ENCODE measurements at regions of chr11 and their contacts with region 1.

Region 1: DNA sequence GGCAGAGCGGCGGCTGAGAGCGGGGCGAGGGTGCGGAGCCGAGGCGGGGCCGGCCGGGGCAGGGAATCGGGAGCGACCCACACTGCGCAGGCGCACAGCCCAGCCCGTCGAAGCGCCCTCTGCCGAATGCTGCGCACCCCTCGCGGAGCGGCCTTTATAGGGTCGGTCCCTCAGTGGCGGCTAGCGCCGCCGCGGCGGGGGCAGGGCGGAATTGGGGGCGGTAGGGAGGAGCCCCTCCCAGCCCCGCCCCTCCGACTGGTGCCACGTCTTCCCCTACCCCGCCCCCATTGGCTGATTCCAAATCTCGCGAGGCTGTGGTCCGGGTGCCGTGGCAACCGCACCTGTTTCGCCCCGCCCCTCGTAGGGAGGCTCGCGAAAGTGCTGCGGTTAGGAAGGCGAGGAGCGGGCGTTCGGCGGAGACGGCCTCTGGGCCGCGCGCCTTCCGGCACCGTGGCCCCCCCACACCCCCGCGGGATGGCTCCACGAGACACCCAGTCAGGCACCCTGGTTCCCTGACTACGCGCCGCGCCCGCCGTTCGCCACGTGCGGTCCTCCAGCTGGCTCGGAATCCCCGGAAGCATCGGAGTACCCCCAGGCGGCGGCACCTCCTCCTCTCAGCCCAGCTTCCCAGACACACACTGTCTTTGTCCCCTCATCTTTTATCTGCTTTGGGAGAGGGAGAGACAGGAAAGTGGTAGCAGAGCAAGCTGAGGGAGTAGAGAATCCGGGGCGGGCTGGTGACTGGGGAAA is at the start of gene EHD1:
- DNase-seq: peak; percentile 98 to 99 (median 99)
- ATAC-seq: peak; percentile 91
- H3K4me3 ChIP-seq: peak within 1 kb of the TSS; percentile 100
- H3K4me3 Mint-ChIP-seq: peak within 1 kb of the TSS; percentile 95 to 99 (median 98)
- H3K27ac ChIP-seq: peak within 1 kb of the TSS; percentile 81
- H3K27ac Mint-ChIP-seq: peak within 1 kb of the TSS; percentile 88 to 98 (median 94)
- H3K4me1 ChIP-seq: peaks cover 39 to 45% of the 10 kb centered on the region in 2 donors
- H3K4me1 Mint-ChIP-seq: peaks cover 49 to 65% (median 60%) of the 10 kb centered on the region in 7 donors
- H3K27me3 ChIP-seq: no peaks in the 10 kb centered on the region
- H3K27me3 Mint-ChIP-seq: no peaks in the 10 kb centered on the region
- total RNA-seq, gene EHD1: 124 to 263 (median 208) TPM

Region 2: DNA sequence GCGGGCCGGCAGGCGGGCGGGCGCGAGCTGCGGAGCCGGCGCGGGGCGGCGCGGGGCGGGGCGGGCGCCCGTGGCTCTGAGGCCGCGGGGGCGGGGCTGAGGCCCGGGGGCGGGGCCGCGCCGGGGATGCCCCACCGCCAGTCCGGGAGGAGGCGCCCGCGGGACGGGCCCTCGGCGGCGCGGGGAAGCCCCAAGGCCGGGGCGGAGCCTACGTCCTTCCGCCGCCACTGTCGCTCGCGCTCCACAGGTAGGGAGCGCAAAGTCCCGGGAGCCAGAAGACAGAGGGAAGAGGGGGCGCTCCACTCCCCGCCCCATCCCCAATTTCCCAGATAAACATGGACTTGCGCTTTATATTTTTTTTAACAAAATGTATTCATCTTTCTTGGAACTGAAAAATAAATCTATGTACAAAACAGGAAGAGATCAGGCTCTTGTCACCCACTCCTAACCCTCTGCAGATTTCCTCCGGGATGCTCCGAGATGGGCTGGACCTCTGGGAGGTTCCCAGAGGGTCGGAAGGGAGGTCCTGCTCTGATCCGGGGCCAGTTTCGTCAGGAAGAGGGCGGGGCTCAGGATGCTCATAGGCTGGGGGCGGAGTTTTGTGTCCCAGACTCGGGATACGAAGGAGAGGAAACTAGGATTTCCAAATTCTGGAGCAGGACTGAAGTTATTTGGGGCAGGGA is 75.4 kb before region 1 on chr11 and contains the start of gene MAP4K2:
- CTCF ChIA-PET with region 1: interaction called, 3 read pairs
- POLR2A ChIA-PET with region 1: no interaction called
- intact Hi-C with region 1: loop called in 1 of 2 experiments (anchors 5 kb)
- DNase-seq: peak; percentile 80 to 96 (median 87)
- ATAC-seq: peak; percentile 98
- H3K4me3 ChIP-seq: peak within 1 kb of the TSS; percentile 91
- H3K4me3 Mint-ChIP-seq: peak within 1 kb of the TSS; percentile 85 to 92 (median 88)
- H3K27ac ChIP-seq: peak within 1 kb of the TSS; percentile 98
- H3K27ac Mint-ChIP-seq: peak within 1 kb of the TSS; percentile 82 to 97 (median 95)
- H3K4me1 ChIP-seq: peaks cover 9 to 23% of the 10 kb centered on the region in 2 donors
- H3K4me1 Mint-ChIP-seq: peaks cover 27 to 43% (median 32%) of the 10 kb centered on the region in 7 donors
- H3K27me3 ChIP-seq: no peaks in the 10 kb centered on the region
- H3K27me3 Mint-ChIP-seq: no peaks in the 10 kb centered on the region
- total RNA-seq, gene MAP4K2: 75.2 to 130 (median 84.3) TPM

Region 3: DNA sequence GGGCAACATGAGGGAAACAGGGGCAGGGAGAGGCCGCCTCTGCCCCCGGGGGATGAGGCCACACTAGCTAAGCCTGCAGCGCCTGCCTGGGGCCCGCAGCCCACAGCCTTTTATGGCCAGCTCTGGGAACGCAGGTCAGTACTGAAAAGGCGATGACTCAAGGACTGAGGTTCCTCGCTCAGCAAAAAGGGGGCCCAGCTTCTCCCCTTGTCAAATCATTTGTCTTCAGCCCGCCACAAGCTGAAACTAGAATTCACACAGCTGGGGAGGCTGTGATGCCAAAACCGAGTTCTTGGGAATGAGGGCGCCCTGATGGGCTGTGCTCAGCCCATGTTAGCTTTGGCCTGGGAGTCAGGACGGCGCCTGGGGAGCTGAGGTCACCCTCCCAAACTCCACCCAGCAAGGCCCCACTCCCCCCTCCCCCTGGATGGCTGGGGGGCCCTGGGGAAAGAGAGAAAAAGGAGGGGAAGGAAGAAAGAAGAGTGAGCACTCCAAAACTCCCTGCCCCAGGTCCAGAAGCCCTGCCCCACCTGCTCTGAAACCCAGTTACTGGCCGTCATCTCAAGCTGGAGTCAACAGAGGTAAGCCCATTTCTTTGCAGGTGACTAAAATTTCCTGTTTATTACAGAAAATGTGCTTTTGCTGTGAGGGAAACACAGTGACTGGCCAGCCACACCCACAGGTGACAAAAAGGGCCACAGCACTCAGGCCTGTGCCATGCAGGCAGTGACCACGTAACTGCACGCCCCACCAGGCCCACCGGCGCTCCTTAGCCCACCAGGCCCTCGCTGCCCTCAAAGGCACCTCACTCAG is 14.0 kb before region 1 on chr11:
- CTCF ChIA-PET with region 1: interaction called, 945 read pairs
- POLR2A ChIA-PET with region 1: interaction called, 1,324 read pairs
- intact Hi-C with region 1: loop called (anchors 1 kb)
- DNase-seq: peak in 1 of 9 donors; percentile 63
- ATAC-seq: no peak
- H3K4me3 ChIP-seq: peak overlapping the region; percentile 45
- H3K4me3 Mint-ChIP-seq: peak overlapping the region; percentile 45 to 91 (median 78)
- H3K27ac ChIP-seq: peak overlapping the region; percentile 76
- H3K27ac Mint-ChIP-seq: peak overlapping the region; percentile 89 to 98 (median 96)
- H3K4me1 ChIP-seq: peaks cover 86 to 98% of the 10 kb centered on the region in 2 donors
- H3K4me1 Mint-ChIP-seq: peaks cover 68 to 94% (median 82%) of the 10 kb centered on the region in 7 donors
- H3K27me3 ChIP-seq: no peaks in the 10 kb centered on the region
- H3K27me3 Mint-ChIP-seq: no peaks in the 10 kb centered on the region

Region 4: DNA sequence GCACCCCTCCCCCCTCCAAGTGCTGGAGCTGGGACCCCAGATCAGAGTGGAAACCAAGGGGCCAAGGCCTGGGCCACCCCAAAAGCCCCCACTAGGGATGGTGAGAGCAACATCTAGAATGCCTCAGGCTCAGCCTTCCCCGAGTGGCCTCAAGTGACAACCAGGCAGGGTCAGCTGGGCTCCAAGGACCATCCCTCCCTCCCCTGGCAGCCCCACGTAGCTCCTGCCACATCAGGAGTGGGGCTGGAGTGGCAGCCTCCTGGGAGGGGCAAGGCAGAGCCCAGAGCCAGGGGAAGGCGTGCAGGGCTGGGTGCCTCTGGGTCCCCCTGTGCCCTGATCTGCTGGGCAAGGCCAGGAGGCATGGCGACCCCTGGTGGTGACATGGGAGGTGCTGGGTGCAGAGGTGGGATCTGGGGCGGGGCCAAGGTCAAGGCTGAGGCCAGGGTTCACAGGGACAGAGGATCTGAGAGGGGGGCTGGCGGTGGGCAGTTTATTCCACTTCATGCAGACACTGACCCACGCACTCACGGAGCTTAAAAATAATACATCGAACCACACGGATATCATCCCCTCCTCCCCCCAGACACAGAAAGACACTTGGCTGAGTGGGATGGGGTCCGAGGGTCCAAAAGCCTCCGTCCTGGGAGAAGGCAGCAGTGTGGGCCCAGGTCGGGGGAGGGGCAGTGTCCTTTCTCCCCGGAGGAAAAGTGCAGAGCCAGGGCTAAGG is 15.6 kb after region 1 on chr11:
- CTCF ChIA-PET with region 1: interaction called, 13 read pairs
- POLR2A ChIA-PET with region 1: interaction called, 91 read pairs
- intact Hi-C with region 1: loop called in 1 of 2 experiments (anchors 2 kb)
- DNase-seq: peak; percentile 75 to 93 (median 87)
- ATAC-seq: peak; percentile 89
- H3K4me3 ChIP-seq: no peak overlapping the region
- H3K4me3 Mint-ChIP-seq: peak overlapping the region in 1 of 10 donors; percentile 21
- H3K27ac ChIP-seq: no peak overlapping the region
- H3K27ac Mint-ChIP-seq: peak overlapping the region in 2 of 9 donors; percentile 45 to 75
- H3K4me1 ChIP-seq: peaks cover 0 to 6% of the 10 kb centered on the region in 2 donors
- H3K4me1 Mint-ChIP-seq: peaks cover 0 to 6% (median 0%) of the 10 kb centered on the region in 7 donors
- H3K27me3 ChIP-seq: no peaks in the 10 kb centered on the region
- H3K27me3 Mint-ChIP-seq: no peaks in the 10 kb centered on the region

Region 5: DNA sequence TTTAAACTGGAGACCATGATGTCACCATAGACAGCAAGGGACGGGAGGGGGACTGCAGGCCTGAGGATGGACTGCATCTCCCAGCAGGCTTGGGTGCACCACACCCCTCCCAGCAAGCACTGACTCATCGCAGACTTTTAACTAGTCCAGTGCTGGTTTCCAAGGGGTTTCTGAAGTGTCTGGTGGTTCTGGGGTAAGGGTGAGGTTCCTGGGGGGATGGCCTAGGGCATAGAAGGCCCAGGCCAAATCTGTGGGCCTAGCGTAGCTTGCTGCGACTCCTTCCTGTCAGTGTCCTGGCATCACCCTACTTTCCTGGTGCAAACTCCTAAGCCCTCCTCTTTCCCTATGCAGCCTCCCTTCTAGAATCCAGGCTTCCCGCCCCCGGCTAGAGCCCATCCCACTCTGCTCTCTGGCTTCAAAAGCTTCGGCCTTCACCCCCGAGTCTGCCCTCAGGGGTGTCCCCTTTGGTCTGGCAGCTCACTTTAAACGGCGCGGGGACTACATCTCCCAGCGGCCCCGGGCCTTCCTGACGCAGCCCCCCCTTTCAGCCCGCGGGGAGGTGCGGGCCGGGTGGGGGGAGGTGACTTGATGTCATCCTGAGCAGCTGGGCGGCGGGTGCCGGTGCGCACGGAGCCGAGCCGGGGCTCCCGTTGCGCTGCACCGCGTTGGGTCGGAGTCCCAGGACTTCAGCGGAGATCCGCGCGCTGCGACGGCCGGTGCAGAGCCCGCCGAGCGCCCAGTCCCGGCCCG is 45.6 kb after region 1 on chr11 and contains the start of gene PPP2R5B:
- CTCF ChIA-PET with region 1: interaction called, 3 read pairs
- POLR2A ChIA-PET with region 1: interaction called, 4 read pairs
- intact Hi-C with region 1: loop called (anchors 1 to 2 kb)
- DNase-seq: peak; percentile 79 to 92 (median 89)
- ATAC-seq: peak; percentile 95
- H3K4me3 ChIP-seq: peak within 1 kb of the TSS; percentile 67
- H3K4me3 Mint-ChIP-seq: peak within 1 kb of the TSS; percentile 89 to 99 (median 96)
- H3K27ac ChIP-seq: peak within 1 kb of the TSS; percentile 81
- H3K27ac Mint-ChIP-seq: peak within 1 kb of the TSS; percentile 95 to 100 (median 98)
- H3K4me1 ChIP-seq: peaks cover 11 to 15% of the 10 kb centered on the region in 2 donors
- H3K4me1 Mint-ChIP-seq: peaks cover 9 to 24% (median 14%) of the 10 kb centered on the region in 7 donors
- H3K27me3 ChIP-seq: no peaks in the 10 kb centered on the region
- H3K27me3 Mint-ChIP-seq: no peaks in the 10 kb centered on the region
- total RNA-seq, gene PPP2R5B: 11.9 to 19.1 (median 18.8) TPM

Region 6: DNA sequence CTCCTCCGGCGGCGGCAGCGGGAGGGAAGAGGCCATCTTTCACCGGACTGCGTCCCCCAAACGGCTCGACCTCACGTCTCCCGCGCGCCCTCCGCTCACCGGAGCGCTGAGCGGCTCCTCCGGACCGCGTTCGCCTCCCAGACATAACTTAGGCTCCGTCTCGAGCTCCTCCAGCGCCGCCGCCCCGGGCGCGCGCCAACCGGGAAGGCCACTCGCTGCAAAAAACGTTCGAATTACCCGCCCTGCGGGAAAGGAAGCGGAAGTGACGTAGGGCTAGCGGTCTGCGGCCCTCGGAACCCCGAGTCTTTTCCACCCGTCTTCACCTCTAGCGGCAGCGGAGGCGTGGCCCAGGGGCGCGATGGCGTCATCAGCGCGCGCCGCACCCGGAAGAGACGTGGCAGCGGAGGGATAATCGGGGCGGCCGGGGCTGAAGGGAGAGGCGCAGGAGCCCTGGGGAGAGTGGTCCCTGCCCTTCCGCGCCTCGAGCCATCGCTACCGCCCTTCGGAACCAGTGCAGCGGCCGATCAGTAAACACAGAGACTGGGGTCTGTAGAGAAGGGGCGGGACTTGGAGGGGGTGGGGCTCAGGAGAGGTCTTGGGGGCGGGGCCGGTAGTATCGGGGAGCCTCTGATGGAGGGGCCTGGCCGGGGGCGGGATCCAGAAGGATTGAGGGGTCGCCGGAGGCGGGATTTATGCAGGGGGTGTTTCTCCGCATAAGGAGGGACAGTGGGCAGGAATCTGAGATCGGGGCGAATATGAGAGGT is 205.3 kb after region 1 on chr11 and contains the starts of genes CDCA5 and ZFPL1:
- CTCF ChIA-PET with region 1: no interaction called
- POLR2A ChIA-PET with region 1: no interaction called
- intact Hi-C with region 1: loop called in 1 of 2 experiments (anchors 1 kb)
- DNase-seq: peak; percentile 94 to 98 (median 97)
- ATAC-seq: peak; percentile 96
- H3K4me3 ChIP-seq: peak within 1 kb of the TSS; percentile 61
- H3K4me3 Mint-ChIP-seq: peak within 1 kb of the TSS; percentile 88 to 99 (median 93)
- H3K27ac ChIP-seq: peak within 1 kb of the TSS; percentile 86
- H3K27ac Mint-ChIP-seq: peak within 1 kb of the TSS; percentile 94 to 99 (median 97)
- H3K4me1 ChIP-seq: peaks cover 13 to 14% of the 10 kb centered on the region in 2 donors
- H3K4me1 Mint-ChIP-seq: peaks cover 20 to 49% (median 27%) of the 10 kb centered on the region in 7 donors
- H3K27me3 ChIP-seq: no peaks in the 10 kb centered on the region
- H3K27me3 Mint-ChIP-seq: peaks cover 0 to 4% (median 0%) of the 10 kb centered on the region in 5 donors
- total RNA-seq, gene CDCA5: 0.56 to 68.1 (median 0.81) TPM
- total RNA-seq, gene ZFPL1: 29.9 to 53.0 (median 49.3) TPM